WTC11 (cell line): ENCODE measurements at regions of chr18 and their contacts with region 1.

Region 1: DNA sequence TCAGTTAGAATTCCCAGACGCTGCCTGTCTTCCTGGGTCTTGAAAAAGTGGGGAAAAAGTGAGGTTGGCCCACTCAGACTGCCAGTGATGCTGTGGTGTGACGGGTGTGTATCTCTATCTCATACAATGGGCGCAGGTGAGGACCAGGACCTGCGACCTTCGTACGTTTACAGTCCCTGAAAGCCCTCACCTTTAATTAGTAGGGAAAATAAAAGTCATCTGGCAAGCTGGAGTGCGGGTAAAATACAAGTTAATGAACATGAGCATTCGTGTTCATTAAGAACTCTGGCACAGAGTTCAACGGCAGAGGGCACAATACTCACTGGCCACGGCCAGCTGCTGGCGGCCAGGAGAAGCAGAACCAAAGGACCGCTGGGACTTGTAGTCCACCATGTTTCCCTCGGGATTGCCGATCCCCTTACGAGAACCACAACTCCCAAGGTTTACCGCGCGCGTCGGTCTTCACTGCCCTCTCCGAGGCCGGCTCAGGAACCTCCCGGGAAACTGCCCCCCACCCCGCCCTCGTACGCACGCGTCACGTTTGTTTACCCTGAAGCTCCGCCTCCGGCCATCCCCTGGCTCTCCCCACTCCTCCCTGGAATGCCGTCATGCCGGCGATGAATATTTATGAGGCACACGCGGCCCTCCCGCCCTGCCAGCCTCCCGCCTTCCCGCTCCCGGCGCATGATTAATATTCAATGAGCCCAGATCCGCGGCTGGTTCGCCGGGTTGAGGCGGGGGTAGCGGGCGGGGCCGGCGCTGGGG is 488 bp upstream of the PHLPP1 start:
- DNase-seq: peak; percentile 100
- ATAC-seq: peak; percentile 91
- H3K4me3 Mint-ChIP-seq: peak overlapping the region; percentile 75
- H3K27ac Mint-ChIP-seq: peak overlapping the region; percentile 99
- H3K4me1 Mint-ChIP-seq: peaks cover 34% of the 10 kb centered on the region
- H3K27me3 Mint-ChIP-seq: no peaks in the 10 kb centered on the region
- CTCF ChIP-seq: 0 out of 2 replicates have a peak, but pooled peaks have one; percentile 20

Region 2: DNA sequence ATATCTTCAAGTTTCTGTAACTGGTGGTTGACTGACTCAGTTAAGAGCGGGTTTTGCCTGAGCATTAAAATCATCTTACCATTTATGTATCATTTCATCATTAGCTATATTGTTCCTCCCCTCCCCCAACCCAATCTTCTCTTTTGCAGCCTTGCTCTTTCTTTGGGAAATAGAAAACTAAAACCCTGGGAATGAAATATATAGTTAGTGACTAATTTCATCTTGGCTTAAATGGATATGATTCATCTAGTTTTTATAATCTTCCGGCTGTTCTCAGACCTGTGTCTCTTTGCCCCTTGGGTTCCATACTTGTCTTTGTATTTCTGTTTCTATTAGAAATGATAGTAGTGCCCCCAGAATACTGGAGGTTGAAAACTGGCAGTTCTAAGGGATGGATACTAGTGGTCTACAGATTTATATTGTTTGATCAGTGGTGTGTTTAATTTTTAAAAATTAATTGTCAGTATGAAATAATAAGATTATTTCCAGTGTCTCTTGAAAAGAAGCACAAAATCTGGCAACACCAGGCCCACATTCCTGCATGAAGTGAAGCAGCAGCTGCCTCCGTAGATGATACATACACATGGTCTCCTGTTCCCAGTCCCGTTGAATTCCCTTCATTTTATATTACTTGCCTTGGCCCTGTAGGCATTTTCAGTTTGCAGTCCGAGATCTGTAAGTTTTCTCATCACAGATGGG is 45.0 kb after region 1 on chr18:
- CTCF ChIA-PET with region 1: interaction called, 4 read pairs
- POLR2A ChIA-PET with region 1: interaction called, 19 read pairs
- DNase-seq: no peak
- ATAC-seq: peak; percentile 36
- H3K4me3 Mint-ChIP-seq: peak overlapping the region; percentile 53
- H3K27ac Mint-ChIP-seq: peak overlapping the region; percentile 99
- H3K4me1 Mint-ChIP-seq: peaks cover 80% of the 10 kb centered on the region
- H3K27me3 Mint-ChIP-seq: no peaks in the 10 kb centered on the region
- CTCF ChIP-seq: no peak

Region 3: GRCh38 chr18:62877411-62878221 is 162.8 kb after region 1 on chr18:
- CTCF ChIA-PET with region 1: interaction called, 6 read pairs
- POLR2A ChIA-PET with region 1: interaction called, 11 read pairs
- DNase-seq: peak; percentile 33
- ATAC-seq: peak; percentile 83
- H3K4me3 Mint-ChIP-seq: peak overlapping the region; percentile 29
- H3K27ac Mint-ChIP-seq: peak overlapping the region; percentile 98
- H3K4me1 Mint-ChIP-seq: peaks cover 77% of the 10 kb centered on the region
- H3K27me3 Mint-ChIP-seq: no peaks in the 10 kb centered on the region
- CTCF ChIP-seq: no peak